ENCODE measurements at regions of chr9 and their contacts with region 1.

Region 1: GRCh38 chr9:121545875-121546423 is 46.3 kb upstream of the GGTA1 start:
- DNase-seq: peak; percentile 95
- H3K4me3 ChIP-seq: peak overlapping the region in 1 of 8 donors; percentile 24
- H3K27ac ChIP-seq: peak overlapping the region in 1 of 8 donors; percentile 41
- H3K4me1 ChIP-seq: peaks cover 12 to 25% (median 20%) of the 10 kb centered on the region in 6 donors
- H3K27me3 ChIP-seq: peaks cover 0 to 58% (median 0%) of the 10 kb centered on the region in 7 donors
- CTCF ChIP-seq: peak; percentile 76 to 96 (median 92)
- POLR2A ChIP-seq: no peak

Region 2: DNA sequence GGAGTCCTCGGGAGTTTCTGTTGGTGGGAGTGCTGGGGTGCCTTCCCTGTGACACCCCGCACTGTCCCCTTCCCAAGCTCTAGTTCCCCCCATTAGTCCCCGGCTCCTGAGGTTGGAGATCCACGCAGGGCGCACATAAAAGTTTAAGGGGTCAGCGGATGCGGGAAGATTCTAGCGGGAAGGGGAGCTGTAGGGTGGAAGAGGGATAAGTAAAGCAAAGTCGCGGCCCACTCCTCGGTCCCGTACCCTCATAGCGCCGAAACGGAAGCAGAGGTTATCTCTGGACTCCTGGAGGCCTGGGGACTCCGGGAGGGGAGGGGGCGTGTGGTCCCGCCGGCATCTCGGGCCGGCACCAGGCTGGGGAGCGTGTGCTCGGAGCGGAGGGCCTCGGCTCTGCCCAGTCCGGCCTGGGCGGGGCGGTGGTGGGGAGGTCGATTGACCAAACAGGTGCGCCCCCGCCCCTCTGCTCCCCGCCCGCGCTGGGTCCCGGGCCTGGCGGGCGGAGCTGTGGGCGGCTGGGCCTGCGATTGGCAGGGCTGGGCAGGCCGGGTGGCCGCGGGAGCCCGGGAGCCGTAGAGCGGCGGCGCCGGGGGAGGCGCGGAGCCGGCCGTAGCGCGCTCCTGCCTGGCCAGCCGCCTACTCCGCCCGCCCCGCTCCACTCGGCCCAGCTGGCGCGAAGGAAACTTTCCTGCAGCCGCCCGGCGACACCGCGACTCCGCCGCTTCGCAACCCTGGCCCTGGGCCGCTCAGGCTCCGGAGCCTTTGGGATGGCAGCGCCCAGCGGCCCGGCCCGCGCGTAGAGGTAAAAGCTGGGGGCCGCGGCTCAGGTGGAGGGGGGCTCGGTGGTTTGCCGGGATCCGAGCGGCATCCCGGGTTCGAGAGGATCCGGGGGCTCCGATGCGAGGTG is 53.3 kb after region 1 on chr9:
- intact Hi-C with region 1: no loop called
- DNase-seq: no peak
- H3K4me3 ChIP-seq: peak overlapping the region; percentile 10 to 64 (median 31)
- H3K27ac ChIP-seq: peak overlapping the region in 3 of 8 donors; percentile 60 to 72 (median 65)
- H3K4me1 ChIP-seq: peaks cover 7 to 39% (median 22%) of the 10 kb centered on the region in 6 donors
- H3K27me3 ChIP-seq: peaks cover 9 to 84% (median 36%) of the 10 kb centered on the region in 7 donors
- CTCF ChIP-seq: no peak
- POLR2A ChIP-seq: no peak

Region 3: DNA sequence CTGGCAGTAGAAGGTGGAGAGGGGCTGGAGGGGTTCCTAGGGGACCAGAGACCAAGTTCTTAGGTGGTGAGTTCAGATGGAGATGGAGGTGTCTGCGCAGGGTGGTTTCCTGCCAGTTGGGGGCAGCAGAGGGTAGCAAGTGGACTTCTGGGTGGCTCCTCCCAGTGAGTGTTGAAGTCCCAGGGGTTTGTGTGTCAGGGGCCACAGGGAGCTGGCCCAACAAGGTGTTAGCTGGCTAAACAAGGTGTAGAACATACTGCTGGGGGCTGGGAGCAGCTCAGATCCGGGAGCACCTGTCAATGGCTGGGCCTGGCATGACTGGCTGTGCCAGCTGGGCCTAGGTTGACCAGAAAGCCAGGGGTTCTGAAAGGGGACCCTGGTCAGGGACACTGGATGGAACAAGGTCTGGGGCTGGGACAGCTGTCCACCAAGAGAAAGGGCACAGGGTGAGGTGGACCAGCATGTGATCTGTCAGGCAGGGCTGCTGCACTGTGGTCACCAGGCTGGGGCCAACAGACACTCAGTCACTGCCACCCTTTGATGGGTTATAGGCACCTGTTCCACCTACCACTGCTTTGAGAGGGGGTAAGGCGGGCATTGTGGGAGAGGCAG is 141.1 kb after region 1 on chr9:
- intact Hi-C with region 1: loop called (anchors 10 kb)
- DNase-seq: peak; percentile 88
- H3K4me3 ChIP-seq: no peak overlapping the region
- H3K27ac ChIP-seq: no peak overlapping the region
- H3K4me1 ChIP-seq: peaks cover 0 to 19% (median 4%) of the 10 kb centered on the region in 6 donors
- H3K27me3 ChIP-seq: peaks cover 0 to 17% (median 0%) of the 10 kb centered on the region in 7 donors
- CTCF ChIP-seq: peak; percentile 55 to 90 (median 81)
- POLR2A ChIP-seq: no peak

Measured in spleen (tissue), 13 donors.